SK-N-SH (cell line): ENCODE measurements at regions of chr12 and their contacts with region 1.

Region 1: GRCh38 chr12:6278439-6279255 is 31.8 kb upstream of the PLEKHG6 start:
- DNase-seq: peak; percentile 98
- H3K4me3 ChIP-seq: peak overlapping the region; percentile 54 to 59
- H3K27ac ChIP-seq: peak overlapping the region; percentile 75 to 88; a peak in 3 of 4 replicates
- H3K4me1 ChIP-seq: peaks cover 32 to 33% of the 10 kb centered on the region in 2 experiments; a peak in 3 of 4 replicates
- H3K27me3 ChIP-seq: no peaks in the 10 kb centered on the region
- CTCF ChIP-seq: peak; percentile 68
- EP300 ChIP-seq: no peak; a peak in 1 of 4 replicates
- RAD21 ChIP-seq: peak; percentile 75

Region 2: GRCh38 chr12:6062757-6063735 is 215.6 kb before region 1 on chr12:
- CTCF ChIA-PET with region 1: interaction called, 121 read pairs
- POLR2A ChIA-PET with region 1: no interaction called
- DNase-seq: peak; percentile 91
- H3K4me3 ChIP-seq: peak overlapping the region in 1 of 2 experiments; percentile 26; a peak in 1 of 4 replicates
- H3K27ac ChIP-seq: peak overlapping the region in 1 of 2 experiments; percentile 69; a peak in 1 of 4 replicates
- H3K4me1 ChIP-seq: peaks cover 0 to 64% of the 10 kb centered on the region in 2 experiments; a peak in 1 of 4 replicates
- H3K27me3 ChIP-seq: no peaks in the 10 kb centered on the region
- CTCF ChIP-seq: peak; percentile 93
- EP300 ChIP-seq: no peak
- RAD21 ChIP-seq: peak; percentile 95

Region 3: GRCh38 chr12:6154730-6155459 is 123.8 kb before region 1 on chr12:
- CTCF ChIA-PET with region 1: interaction called, 17 read pairs
- POLR2A ChIA-PET with region 1: no interaction called
- DNase-seq: peak; percentile 92
- H3K4me3 ChIP-seq: no peak overlapping the region
- H3K27ac ChIP-seq: peak overlapping the region in 1 of 2 experiments; percentile 95; a peak in 2 of 4 replicates
- H3K4me1 ChIP-seq: peaks cover 0 to 15% of the 10 kb centered on the region in 2 experiments; a peak in 1 of 4 replicates
- H3K27me3 ChIP-seq: no peaks in the 10 kb centered on the region
- CTCF ChIP-seq: no peak
- EP300 ChIP-seq: peak in 1 of 2 experiments; percentile 93; a peak in 2 of 4 replicates
- RAD21 ChIP-seq: peak; percentile 25

Region 4: DNA sequence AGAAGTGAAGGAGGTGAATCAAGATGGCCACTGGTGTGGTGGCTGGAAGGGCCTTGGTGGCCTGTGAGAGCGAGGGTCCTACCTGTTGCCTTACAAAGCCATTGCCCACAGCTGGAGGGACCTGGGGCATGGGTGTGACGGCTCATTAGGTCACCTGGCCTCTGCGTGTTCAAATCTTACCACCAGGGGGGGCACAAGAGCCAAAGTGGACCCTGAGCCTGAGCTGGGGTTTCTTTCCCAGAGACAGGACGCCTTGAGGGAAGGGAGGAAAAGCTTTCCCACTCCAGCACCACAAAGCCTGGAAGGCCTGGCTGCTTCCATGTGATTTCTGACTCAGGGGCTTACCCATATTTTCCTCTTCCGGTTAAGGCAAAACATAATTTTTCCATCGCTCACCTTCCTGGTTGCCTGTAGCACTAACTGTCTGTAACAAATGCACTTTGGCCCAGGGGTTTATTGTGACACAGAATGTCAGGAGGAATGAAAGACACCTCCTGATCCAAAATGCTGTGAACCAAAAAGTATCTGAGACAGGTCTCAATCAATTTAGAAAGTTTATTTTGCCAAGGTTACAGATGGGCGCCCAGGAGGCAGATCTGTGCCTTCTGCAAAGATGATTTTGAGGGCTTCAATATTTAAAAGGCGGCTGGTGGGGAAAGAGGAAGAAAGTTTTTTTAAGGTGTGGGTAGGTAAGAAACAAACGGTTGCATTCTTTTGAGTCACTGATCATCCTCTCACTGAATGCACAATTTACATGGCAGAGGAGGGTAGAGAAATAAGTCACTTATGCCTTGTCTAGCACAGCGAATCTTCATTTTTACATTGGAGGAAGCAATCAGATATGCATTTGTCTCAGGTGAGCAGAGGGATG is 82.7 kb before region 1 on chr12:
- CTCF ChIA-PET with region 1: interaction called, 299 read pairs
- POLR2A ChIA-PET with region 1: interaction called, 10 read pairs
- DNase-seq: peak; percentile 96
- H3K4me3 ChIP-seq: no peak overlapping the region
- H3K27ac ChIP-seq: peak overlapping the region; percentile 56 to 59; a peak in 3 of 4 replicates
- H3K4me1 ChIP-seq: peaks cover 0 to 28% of the 10 kb centered on the region in 2 experiments; a peak in 1 of 4 replicates
- H3K27me3 ChIP-seq: no peaks in the 10 kb centered on the region
- CTCF ChIP-seq: peak; percentile 90
- EP300 ChIP-seq: no peak
- RAD21 ChIP-seq: peak; percentile 92

Region 5: DNA sequence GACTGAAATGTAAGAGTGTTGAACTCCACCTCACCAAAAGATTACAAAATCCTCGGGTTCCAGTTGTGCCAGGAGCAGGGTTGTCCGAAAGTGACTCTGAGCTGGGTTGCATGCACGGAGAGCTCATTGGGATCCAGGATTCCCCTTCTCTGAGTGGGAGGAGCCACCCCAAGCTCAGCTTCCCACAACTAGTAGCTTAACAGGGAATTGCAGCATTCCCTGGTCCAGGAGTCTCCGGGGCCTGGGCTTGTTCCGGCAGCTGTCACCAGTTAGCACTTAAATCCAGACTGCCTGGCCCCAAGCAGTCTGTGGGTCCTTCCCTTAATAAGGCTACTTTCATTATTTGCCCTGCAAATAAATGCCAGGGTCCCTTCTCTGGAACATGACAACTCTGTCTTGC is 28.3 kb before region 1 on chr12:
- CTCF ChIA-PET with region 1: interaction called, 54 read pairs
- POLR2A ChIA-PET with region 1: interaction called, 4 read pairs
- DNase-seq: peak; percentile 63
- H3K4me3 ChIP-seq: no peak overlapping the region
- H3K27ac ChIP-seq: peak overlapping the region in 1 of 2 experiments; percentile 92; a peak in 2 of 4 replicates
- H3K4me1 ChIP-seq: peaks cover 0 to 35% of the 10 kb centered on the region in 2 experiments; a peak in 2 of 4 replicates
- H3K27me3 ChIP-seq: no peaks in the 10 kb centered on the region
- CTCF ChIP-seq: no peak
- EP300 ChIP-seq: peak in 1 of 2 experiments; percentile 65; a peak in 1 of 4 replicates
- RAD21 ChIP-seq: 0 out of 2 replicates have a peak, but pooled peaks have one; percentile 14

Region 6: DNA sequence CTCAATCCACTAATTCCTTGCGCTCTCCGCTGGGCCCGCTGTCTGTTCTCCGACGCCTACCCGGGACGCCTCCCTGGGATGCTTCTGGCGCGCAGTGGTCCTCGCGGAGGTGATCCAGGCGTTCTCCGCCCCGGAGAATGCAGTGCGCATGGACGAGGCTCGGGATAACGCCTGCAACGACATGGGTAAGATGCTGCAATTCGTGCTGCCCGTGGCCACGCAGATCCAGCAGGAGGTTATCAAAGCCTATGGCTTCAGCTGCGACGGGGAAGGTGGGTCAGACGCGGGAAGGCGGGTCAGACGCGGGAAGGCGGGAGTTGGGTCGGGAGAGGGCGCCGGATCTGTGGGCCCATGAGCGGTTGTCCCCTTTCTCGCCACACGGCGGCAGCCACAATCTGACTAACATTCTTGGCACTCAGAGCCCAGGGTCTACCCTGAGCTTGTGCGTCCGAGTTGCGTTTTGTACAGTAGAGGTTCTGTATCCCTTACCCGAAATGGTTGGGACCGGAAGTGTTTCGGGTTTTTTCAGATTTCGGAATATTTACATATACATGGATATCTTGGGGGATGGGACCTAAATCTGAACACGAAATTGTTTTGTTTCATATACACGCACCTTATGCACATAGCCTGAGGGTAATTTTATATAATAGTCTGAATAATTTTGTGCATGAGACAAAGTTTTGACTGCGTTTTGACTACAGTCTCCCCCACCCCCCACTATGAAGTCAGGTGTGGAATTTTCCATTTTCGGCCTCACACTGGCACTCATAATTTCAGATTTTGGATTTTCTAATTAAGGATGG is 665.9 kb after region 1 on chr12:
- CTCF ChIA-PET with region 1: no interaction called
- POLR2A ChIA-PET with region 1: no interaction called
- DNase-seq: peak; percentile 93
- H3K4me3 ChIP-seq: peak overlapping the region; percentile 67 to 72
- H3K27ac ChIP-seq: peak overlapping the region; percentile 89 to 98
- H3K4me1 ChIP-seq: peaks cover 6 to 13% of the 10 kb centered on the region in 2 experiments; a peak in 3 of 4 replicates
- H3K27me3 ChIP-seq: no peaks in the 10 kb centered on the region
- CTCF ChIP-seq: peak; percentile 76
- EP300 ChIP-seq: no peak
- RAD21 ChIP-seq: peak; percentile 82